ENCODE measurements at regions of chr3 and their contacts with region 1.

Region 1: DNA sequence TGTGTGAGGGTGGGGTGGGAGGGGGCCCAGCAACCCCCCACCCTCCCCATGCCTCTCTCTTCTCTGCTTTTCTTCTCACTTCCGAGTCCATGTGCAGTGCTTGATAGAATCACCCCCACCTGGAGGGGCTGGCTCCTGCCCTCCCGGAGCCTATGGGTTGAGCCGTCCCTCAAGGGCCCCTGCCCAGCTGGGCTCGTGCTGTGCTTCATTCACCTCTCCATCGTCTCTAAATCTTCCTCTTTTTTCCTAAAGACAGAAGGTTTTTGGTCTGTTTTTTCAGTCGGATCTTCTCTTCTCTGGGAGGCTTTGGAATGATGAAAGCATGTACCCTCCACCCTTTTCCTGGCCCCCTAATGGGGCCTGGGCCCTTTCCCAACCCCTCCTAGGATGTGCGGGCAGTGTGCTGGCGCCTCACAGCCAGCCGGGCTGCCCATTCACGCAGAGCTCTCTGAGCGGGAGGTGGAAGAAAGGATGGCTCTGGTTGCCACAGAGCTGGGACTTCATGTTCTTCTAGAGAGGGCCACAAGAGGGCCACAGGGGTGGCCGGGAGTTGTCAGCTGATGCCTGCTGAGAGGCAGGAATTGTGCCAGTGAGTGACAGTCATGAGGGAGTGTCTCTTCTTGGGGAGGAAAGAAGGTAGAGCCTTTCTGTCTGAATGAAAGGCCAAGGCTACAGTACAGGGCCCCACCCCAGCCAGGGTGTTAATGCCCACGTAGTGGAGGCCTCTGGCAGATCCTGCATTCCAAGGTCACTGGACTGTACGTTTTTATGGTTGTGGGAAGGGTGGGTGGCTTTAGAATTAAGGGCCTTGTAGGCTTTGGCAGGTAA is 8.1 kb downstream of the FAM131A start:
- DNase-seq: peak; percentile 82 to 88 (median 84)
- ATAC-seq: peak; percentile 87
- H3K4me3 ChIP-seq: no peak overlapping the region
- H3K27ac ChIP-seq: no peak overlapping the region; the same call in 1 of the 3 replicates
- H3K4me1 ChIP-seq: peaks cover 48 to 56% of the 10 kb centered on the region in 2 experiments
- H3K27me3 ChIP-seq: no peaks in the 10 kb centered on the region
- CTCF ChIP-seq: peak; percentile 62 to 81 (median 77)
- EP300 ChIP-seq: no peak
- POLR2A ChIP-seq: no peak
- RAD21 ChIP-seq: peak; percentile 14 to 54; a peak in 2 of 4 replicates

Region 2: DNA sequence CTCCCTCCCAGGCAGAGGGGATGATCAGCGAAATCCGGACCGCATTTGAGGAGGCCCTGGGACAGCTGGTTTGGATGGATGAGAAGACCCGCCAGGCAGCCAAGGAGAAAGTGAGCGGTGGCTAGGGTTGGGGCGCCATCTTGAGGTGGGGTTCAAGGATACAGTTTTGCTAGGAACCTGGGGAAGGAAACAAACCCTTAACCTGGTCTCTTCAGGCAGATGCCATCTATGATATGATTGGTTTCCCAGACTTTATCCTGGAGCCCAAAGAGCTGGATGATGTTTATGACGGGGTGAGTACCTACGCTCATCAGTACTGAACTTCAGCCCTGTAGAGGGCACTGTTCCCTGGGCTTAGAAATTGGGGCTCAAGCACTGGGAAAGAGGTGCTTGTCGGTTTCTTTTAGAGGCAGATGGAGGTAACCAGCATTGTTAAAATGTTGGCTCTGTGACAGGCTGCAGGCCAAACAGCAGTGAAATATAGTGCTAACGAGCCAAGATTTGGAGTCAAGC is 56.0 kb before region 1 on chr3:
- CTCF ChIA-PET with region 1: no interaction called
- POLR2A ChIA-PET with region 1: no interaction called
- in situ Hi-C with region 1: no loop called
- intact Hi-C with region 1: no loop called
- DNase-seq: peak; percentile 75 to 82 (median 78)
- ATAC-seq: peak; percentile 90
- H3K4me3 ChIP-seq: no peak overlapping the region
- H3K27ac ChIP-seq: no peak overlapping the region
- H3K4me1 ChIP-seq: peaks cover 0 to 12% of the 10 kb centered on the region in 2 experiments; a peak in 2 of 5 replicates
- H3K27me3 ChIP-seq: peaks cover 23 to 47% of the 10 kb centered on the region in 2 experiments
- CTCF ChIP-seq: peak; percentile 84 to 92 (median 84)
- EP300 ChIP-seq: no peak
- POLR2A ChIP-seq: no peak
- RAD21 ChIP-seq: peak; percentile 76 to 87

Region 3: DNA sequence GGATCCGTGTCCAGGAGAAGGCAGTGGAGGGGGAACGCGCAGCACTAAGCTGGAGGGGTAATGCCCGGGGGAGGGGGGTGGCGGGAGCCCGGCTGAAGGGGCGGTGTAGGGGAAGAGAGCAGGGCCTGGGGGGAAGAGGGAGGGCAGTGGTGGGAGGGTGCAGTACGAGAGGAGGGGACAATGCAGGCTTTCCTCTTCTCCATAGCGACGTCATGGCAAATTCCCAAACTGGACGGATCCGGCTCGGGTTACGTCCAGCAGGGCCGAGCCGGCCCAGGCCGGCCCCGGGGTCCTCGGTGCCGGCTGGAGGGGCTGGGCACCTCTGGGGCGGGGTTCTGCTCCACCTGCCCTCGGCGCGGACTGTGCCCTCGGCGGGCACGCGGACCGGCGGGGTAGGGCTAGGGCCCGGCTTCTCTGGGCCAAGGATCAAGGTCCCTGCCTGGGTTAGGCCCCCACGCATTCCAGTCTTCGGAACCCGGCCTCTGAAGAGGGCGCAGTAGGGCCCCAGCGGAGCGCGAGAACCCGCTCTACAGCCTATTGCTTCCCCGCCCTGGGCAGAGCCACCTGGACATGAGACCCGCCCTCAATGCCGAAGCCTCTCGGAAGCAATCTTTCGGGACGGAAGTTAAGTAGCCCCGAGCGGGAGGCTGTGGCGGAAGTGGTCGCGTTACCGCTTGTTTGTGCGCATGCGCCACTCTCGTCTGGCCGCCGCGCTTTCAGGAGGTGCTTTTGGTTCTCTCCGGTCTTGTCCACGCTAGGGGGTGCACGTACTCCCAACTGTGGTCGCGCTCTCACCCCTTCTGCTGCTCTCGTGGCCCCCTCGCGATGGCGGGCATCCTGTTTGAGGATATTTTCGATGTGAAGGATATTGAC is 17.4 kb after region 1 on chr3:
- CTCF ChIA-PET with region 1: no interaction called
- POLR2A ChIA-PET with region 1: interaction called, 9 read pairs
- in situ Hi-C with region 1: no loop called
- intact Hi-C with region 1: loop called (anchors 1 kb)
- DNase-seq: peak; percentile 87 to 99 (median 92)
- ATAC-seq: peak; percentile 90
- H3K4me3 ChIP-seq: peak overlapping the region; percentile 71
- H3K27ac ChIP-seq: peak overlapping the region; percentile 98
- H3K4me1 ChIP-seq: peaks cover 26 to 53% of the 10 kb centered on the region in 2 experiments
- H3K27me3 ChIP-seq: no peaks in the 10 kb centered on the region
- CTCF ChIP-seq: peak; percentile 78 to 88 (median 80)
- EP300 ChIP-seq: no peak
- POLR2A ChIP-seq: peak; percentile 93
- RAD21 ChIP-seq: peak; percentile 17 to 22; a peak in 1 of 4 replicates